ENCODE measurements at regions of chr6 and their contacts with region 1.

Region 1: GRCh38 chr6:132279592-132280139 is 121.6 kb downstream of the MOXD1 start:
- DNase-seq: peak; percentile 85
- ATAC-seq: peak; percentile 86
- H3K4me3 Mint-ChIP-seq: peak overlapping the region; percentile 60
- H3K27ac Mint-ChIP-seq: peak overlapping the region; percentile 40
- H3K4me1 Mint-ChIP-seq: no peaks in the 10 kb centered on the region
- H3K27me3 Mint-ChIP-seq: peaks cover 16% of the 10 kb centered on the region

Region 2: DNA sequence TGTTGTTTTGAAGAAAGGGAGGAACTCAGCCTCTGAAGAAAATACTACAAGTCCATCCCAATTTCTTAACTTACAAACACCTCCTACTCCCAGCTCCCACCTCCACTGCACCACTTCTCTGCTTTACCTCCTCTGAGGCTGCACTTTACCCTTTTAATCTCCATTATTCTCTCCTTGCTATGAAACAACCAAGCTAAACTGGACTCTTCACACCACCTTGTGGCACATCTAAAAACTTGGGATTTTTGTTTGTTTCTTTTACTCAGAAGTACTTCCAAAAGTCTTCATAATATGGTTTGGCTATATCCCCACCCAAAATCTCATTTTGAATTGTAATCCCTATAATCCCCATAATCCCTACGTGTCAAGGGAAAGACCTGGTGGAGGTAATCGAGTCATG is 20.6 kb before region 1 on chr6:
- CTCF ChIA-PET with region 1: interaction called, 32 read pairs
- POLR2A ChIA-PET with region 1: no interaction called
- intact Hi-C with region 1: no loop called
- DNase-seq: no peak
- ATAC-seq: no peak
- H3K4me3 Mint-ChIP-seq: no peak overlapping the region
- H3K27ac Mint-ChIP-seq: no peak overlapping the region
- H3K4me1 Mint-ChIP-seq: no peaks in the 10 kb centered on the region
- H3K27me3 Mint-ChIP-seq: peaks cover 25% of the 10 kb centered on the region

Region 3: GRCh38 chr6:132300323-132300949 is 20.8 kb after region 1 on chr6:
- CTCF ChIA-PET with region 1: interaction called, 137 read pairs
- POLR2A ChIA-PET with region 1: no interaction called
- intact Hi-C with region 1: loop called (anchors 1 kb)
- DNase-seq: peak; percentile 46
- ATAC-seq: peak; percentile 79
- H3K4me3 Mint-ChIP-seq: no peak overlapping the region
- H3K27ac Mint-ChIP-seq: no peak overlapping the region
- H3K4me1 Mint-ChIP-seq: no peaks in the 10 kb centered on the region
- H3K27me3 Mint-ChIP-seq: peaks cover 11% of the 10 kb centered on the region

Region 4: DNA sequence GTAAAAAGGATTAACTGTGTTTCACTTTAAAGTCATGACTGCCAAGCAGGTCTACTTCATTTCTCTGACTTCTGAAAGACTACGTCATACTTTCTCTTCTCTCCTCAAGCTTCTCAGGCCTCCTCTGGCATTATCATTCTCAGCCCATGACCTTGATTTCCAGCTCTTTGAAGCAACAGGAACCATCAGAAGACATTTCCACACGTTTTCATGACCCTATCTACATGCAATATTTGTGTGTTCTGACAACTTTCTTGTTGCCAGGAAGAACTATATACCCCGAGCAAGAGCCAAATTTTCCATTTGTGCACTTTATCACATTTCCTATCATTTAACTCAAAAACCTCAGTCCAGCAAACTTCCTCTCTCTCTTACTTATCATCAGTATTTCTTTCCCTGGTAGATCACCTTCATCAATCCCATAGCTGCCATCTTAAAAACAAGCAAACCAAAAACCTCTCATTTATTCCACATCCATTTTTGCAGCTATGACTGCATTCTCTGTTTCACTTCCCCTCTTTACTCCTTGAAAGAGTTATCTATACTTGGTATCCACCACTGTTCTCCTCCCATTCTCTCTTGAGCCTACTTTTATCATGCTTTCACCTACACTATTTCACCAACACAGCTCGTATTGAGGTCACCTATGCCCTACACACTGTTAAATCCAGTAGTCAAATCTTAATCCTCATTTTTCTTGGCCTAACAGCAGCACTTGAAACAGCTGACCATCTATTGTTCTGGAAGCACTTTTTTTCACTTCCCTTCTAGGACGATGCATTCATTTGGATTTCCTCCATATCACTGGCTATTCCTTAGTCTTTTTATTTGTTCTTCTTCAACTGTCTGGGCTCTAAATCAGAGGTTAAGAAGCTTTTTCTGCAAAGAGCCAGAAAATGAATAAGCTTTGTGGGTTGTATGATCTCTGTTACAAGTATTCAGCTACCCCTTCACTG is 186.1 kb after region 1 on chr6:
- CTCF ChIA-PET with region 1: interaction called, 20 read pairs
- POLR2A ChIA-PET with region 1: no interaction called
- intact Hi-C with region 1: no loop called
- DNase-seq: no peak
- ATAC-seq: peak; percentile 80
- H3K4me3 Mint-ChIP-seq: no peak overlapping the region
- H3K27ac Mint-ChIP-seq: no peak overlapping the region
- H3K4me1 Mint-ChIP-seq: no peaks in the 10 kb centered on the region
- H3K27me3 Mint-ChIP-seq: no peaks in the 10 kb centered on the region

Region 5: DNA sequence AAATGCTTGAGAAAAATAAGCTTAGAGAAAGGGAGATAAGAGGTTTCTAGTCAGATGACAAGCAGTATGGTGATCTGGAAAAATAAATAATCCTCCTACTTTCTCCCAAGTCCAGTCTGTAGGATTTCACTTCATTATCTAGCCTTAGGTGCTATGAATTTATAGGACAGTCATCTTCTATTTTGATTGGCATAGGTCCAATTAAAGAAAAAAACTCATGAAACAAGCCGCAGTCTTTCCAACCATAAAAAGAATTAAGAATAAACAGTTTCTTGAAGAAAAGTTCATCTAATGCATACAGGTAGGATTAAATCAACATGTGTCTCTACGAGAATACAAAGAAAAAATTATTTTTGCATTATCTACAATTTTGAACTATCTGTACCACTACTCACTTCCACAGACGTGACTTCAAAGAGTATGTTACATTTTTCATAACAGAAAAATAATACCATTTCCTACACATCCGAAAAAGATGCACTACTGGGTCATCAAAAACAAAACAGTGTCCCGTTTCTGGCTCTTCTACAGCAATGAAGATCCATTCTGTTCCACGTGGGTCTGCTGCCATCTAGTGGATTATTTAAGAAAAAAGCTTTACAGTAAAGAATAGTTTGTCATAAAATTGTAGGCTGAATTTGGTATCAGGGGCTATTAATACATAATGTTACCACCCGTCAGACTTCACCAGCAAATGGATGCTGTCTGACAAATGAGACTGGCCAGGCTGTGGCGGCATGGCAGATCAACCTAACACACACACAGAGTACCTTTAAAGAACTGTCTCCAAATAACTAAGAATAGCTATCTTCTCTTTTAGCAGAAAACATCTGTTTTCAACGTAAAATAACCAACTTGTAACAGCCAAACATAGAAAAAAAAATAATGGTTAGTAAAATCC is 204.4 kb after region 1 on chr6:
- CTCF ChIA-PET with region 1: interaction called, 228 read pairs
- POLR2A ChIA-PET with region 1: no interaction called
- intact Hi-C with region 1: loop called (anchors 1 kb)
- DNase-seq: peak; percentile 55
- ATAC-seq: peak; percentile 55
- H3K4me3 Mint-ChIP-seq: no peak overlapping the region
- H3K27ac Mint-ChIP-seq: no peak overlapping the region
- H3K4me1 Mint-ChIP-seq: peaks cover 22% of the 10 kb centered on the region
- H3K27me3 Mint-ChIP-seq: no peaks in the 10 kb centered on the region

Region 6: GRCh38 chr6:132512638-132513632 is 233.3 kb after region 1 on chr6 and contains the start of gene STX7:
- CTCF ChIA-PET with region 1: interaction called, 10 read pairs
- POLR2A ChIA-PET with region 1: interaction called, 3 read pairs
- intact Hi-C with region 1: no loop called
- DNase-seq: peak; percentile 90
- ATAC-seq: peak; percentile 97
- H3K4me3 Mint-ChIP-seq: peak within 1 kb of the TSS; percentile 88
- H3K27ac Mint-ChIP-seq: peak within 1 kb of the TSS; percentile 85
- H3K4me1 Mint-ChIP-seq: peaks cover 30% of the 10 kb centered on the region
- H3K27me3 Mint-ChIP-seq: no peaks in the 10 kb centered on the region
- total RNA-seq, gene STX7: 13.3 to 20.3 TPM